ENCODE measurements at regions of chr18 and their contacts with region 1.

Region 1: GRCh38 chr18:47120428-47120827 is 29.9 kb downstream of the HDHD2 start:
- DNase-seq: peak; percentile 32
- ATAC-seq: peak; percentile 95
- H3K4me3 Mint-ChIP-seq: no peak overlapping the region
- H3K27ac Mint-ChIP-seq: peak overlapping the region; percentile 33
- H3K4me1 Mint-ChIP-seq: peaks cover 36% of the 10 kb centered on the region
- H3K27me3 Mint-ChIP-seq: no peaks in the 10 kb centered on the region

Region 2: DNA sequence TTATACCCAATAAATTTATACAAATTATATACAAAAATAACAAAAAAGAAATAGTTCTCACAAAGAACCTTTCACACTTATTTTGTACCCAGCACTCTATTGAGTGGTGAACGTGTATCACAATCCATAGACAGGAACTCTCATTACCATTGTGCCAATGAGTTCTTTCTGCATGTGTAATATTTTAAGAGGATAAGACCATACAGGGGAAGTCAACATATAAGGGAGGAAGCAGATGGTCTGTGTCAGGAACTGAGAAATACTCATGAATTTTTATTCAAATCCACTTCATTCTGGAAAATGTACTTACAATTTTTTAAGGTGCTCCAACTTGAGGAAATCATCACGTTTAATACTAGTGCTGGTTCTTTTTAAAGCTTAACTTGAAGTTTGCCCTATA is 58.0 kb before region 1 on chr18:
- CTCF ChIA-PET with region 1: no interaction called
- POLR2A ChIA-PET with region 1: no interaction called
- intact Hi-C with region 1: no loop called
- DNase-seq: no peak
- ATAC-seq: no peak
- H3K4me3 Mint-ChIP-seq: no peak overlapping the region
- H3K27ac Mint-ChIP-seq: no peak overlapping the region
- H3K4me1 Mint-ChIP-seq: no peaks in the 10 kb centered on the region
- H3K27me3 Mint-ChIP-seq: no peaks in the 10 kb centered on the region

Region 3: GRCh38 chr18:47081578-47081977 is 38.9 kb before region 1 on chr18:
- CTCF ChIA-PET with region 1: no interaction called
- POLR2A ChIA-PET with region 1: no interaction called
- intact Hi-C with region 1: no loop called
- DNase-seq: no peak
- ATAC-seq: no peak
- H3K4me3 Mint-ChIP-seq: no peak overlapping the region
- H3K27ac Mint-ChIP-seq: no peak overlapping the region
- H3K4me1 Mint-ChIP-seq: no peaks in the 10 kb centered on the region
- H3K27me3 Mint-ChIP-seq: no peaks in the 10 kb centered on the region

Region 4: GRCh38 chr18:47108373-47108772 is 12.1 kb before region 1 on chr18:
- CTCF ChIA-PET with region 1: no interaction called
- POLR2A ChIA-PET with region 1: no interaction called
- intact Hi-C with region 1: no loop called
- DNase-seq: no peak
- ATAC-seq: no peak
- H3K4me3 Mint-ChIP-seq: no peak overlapping the region
- H3K27ac Mint-ChIP-seq: no peak overlapping the region
- H3K4me1 Mint-ChIP-seq: no peaks in the 10 kb centered on the region
- H3K27me3 Mint-ChIP-seq: no peaks in the 10 kb centered on the region

Region 5: DNA sequence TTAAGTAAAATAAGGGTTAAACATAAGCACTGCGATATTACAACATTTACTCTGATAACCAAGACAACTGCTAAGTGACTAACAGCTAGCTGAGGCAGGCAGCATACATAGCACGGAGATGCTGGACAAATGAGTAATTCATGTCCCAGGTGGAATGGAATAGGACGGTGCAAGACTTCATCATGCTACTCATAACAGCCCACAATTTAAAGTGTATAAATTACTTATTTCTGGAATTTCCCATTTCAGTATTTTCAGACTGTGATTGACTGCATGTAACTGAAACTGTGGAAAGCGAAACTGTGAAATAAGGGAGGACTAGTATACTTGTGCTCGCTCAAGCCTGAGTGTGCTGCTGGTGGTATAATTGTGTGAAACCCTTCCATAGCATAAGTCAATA is 42.8 kb after region 1 on chr18:
- CTCF ChIA-PET with region 1: no interaction called
- POLR2A ChIA-PET with region 1: interaction called, 3 read pairs
- intact Hi-C with region 1: loop called in 1 of 2 experiments (anchors 5 kb)
- DNase-seq: peak; percentile 17
- ATAC-seq: peak; percentile 95
- H3K4me3 Mint-ChIP-seq: no peak overlapping the region
- H3K27ac Mint-ChIP-seq: no peak overlapping the region
- H3K4me1 Mint-ChIP-seq: peaks cover 34% of the 10 kb centered on the region
- H3K27me3 Mint-ChIP-seq: no peaks in the 10 kb centered on the region

Region 6: DNA sequence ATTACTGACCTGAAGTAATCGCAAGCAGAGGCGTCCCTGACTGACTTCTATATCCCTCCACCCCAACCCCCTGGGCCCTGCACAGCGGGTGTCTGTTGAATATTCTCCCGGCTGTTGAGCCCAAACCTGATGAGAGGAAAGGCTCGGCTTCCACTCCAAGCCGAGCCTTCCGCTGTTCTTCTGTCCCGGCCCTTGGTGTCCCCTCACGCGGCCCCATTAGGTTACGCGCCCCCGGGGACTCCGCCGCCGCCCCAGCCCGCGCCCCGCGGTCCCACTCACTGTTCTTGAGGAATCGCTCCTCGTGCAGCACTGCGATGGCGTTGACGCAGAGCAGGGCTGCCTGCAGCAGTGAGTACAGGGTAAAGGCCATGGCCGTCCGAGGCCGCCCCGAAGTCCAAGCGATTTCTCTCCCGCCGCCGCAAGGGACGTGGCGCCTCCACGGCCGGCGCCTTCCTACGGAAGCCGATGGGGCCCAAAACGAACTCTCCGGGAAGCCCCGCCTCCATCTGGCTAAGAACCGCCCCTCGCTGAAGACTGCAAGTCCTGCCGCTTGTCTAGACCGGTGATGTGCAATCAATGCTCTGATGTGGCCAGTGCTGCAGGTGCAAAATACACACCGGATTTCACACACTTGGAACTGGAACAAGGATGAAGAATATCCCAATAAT is 55.6 kb after region 1 on chr18 and contains the start of gene IER3IP1:
- CTCF ChIA-PET with region 1: no interaction called
- POLR2A ChIA-PET with region 1: no interaction called
- intact Hi-C with region 1: loop called in 1 of 2 experiments (anchors 1 kb)
- DNase-seq: peak; percentile 93
- ATAC-seq: peak; percentile 92
- H3K4me3 Mint-ChIP-seq: no peak within 1 kb of the TSS
- H3K27ac Mint-ChIP-seq: peak within 1 kb of the TSS; percentile 40
- H3K4me1 Mint-ChIP-seq: peaks cover 2% of the 10 kb centered on the region
- H3K27me3 Mint-ChIP-seq: no peaks in the 10 kb centered on the region
- total RNA-seq, gene IER3IP1: 9.0 to 11.5 TPM

Measured in activated CD4-positive, alpha-beta T cell treated with anti-CD3 and anti-CD28 coated beads for 36 hours (primary cell).